Activated CD8-positive, alpha-beta T cell treated with anti-CD3 and anti-CD28 coated beads, Interleukin-2, amount 10 ng/mL, durations not matched to agents 7 days and 5 days (primary cell): ENCODE measurements at regions of chr6 and their contacts with region 1.

Region 1: GRCh38 chr6:143427109-143427817 is 23.2 kb downstream of the ADAT2 start:
- DNase-seq: peak; percentile 79
- ATAC-seq: peak; percentile 98
- H3K4me3 Mint-ChIP-seq: no peak overlapping the region
- H3K27ac Mint-ChIP-seq: no peak overlapping the region
- H3K4me1 Mint-ChIP-seq: no peaks in the 10 kb centered on the region
- H3K27me3 Mint-ChIP-seq: no peaks in the 10 kb centered on the region

Region 2: DNA sequence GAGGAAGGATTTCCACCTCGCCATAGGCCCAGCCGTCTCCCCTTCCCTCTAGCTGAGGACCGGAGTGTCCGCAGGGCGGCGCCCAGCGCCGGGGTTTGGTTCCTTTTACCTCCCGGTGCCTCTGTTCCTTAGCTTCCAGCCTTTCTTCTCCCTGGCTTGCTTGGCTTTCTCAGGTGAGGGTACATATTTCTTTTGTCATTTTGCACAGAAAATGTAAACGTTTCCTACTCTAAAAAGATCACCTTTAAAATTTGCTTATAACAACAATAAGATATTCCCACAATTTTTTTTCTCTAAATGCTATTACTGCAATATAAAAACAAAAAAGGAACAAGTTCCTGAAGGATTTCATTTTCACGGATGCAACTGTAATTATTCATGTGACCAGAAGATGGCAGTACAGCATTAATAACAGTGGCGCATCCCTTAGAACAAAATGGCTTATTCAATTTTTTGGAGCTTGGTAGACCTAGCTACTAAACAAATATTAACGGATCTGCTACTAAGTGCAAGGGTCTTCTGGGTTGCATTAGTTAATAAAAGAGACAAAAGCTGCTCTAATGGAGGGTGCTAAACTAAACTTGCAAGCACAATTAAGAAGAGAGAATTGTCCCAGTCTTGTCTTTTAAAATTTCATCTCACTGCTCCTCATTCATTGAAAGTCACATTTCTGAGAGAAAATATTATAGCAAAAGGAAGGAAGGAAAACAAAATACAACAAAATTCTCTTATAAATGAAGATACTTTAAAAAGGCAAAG is 952.6 kb before region 1 on chr6:
- CTCF ChIA-PET with region 1: interaction called, 33 read pairs
- POLR2A ChIA-PET with region 1: no interaction called
- DNase-seq: no peak
- ATAC-seq: no peak
- H3K4me3 Mint-ChIP-seq: no peak overlapping the region
- H3K27ac Mint-ChIP-seq: no peak overlapping the region
- H3K4me1 Mint-ChIP-seq: peaks cover 14% of the 10 kb centered on the region
- H3K27me3 Mint-ChIP-seq: peaks cover 3% of the 10 kb centered on the region

Region 3: GRCh38 chr6:143026696-143027449 is 400.4 kb before region 1 on chr6:
- CTCF ChIA-PET with region 1: interaction called, 12 read pairs
- POLR2A ChIA-PET with region 1: no interaction called
- DNase-seq: peak; percentile 54
- ATAC-seq: peak; percentile 64
- H3K4me3 Mint-ChIP-seq: no peak overlapping the region
- H3K27ac Mint-ChIP-seq: no peak overlapping the region
- H3K4me1 Mint-ChIP-seq: no peaks in the 10 kb centered on the region
- H3K27me3 Mint-ChIP-seq: no peaks in the 10 kb centered on the region

Region 4: DNA sequence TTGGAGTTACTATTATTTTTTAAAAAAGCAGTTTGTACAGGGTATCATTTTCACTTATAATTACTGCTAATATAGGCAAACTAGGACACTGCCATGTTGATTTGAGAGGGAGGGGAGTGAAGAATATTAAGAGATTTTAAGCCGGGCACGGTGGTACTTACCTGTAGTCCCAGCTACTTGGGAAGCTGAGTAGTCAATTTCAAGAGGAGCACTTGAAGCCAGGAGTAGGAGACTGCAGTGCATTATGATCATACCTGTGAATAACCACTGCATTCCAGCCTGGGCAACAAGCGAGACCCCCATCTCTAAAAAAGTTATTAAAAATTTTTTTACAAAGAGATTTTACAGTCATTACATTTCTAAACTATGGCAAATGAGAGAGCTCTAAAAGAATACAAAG is 12.5 kb before region 1 on chr6:
- CTCF ChIA-PET with region 1: interaction called, 23 read pairs
- POLR2A ChIA-PET with region 1: interaction called, 3 read pairs
- DNase-seq: no peak
- ATAC-seq: no peak
- H3K4me3 Mint-ChIP-seq: no peak overlapping the region
- H3K27ac Mint-ChIP-seq: no peak overlapping the region
- H3K4me1 Mint-ChIP-seq: no peaks in the 10 kb centered on the region
- H3K27me3 Mint-ChIP-seq: peaks cover 2% of the 10 kb centered on the region

Region 5: GRCh38 chr6:143450453-143451371 is 23.4 kb after region 1 on chr6 and contains the starts of genes ADAT2 and PEX3:
- CTCF ChIA-PET with region 1: interaction called, 10 read pairs
- POLR2A ChIA-PET with region 1: interaction called, 7 read pairs
- DNase-seq: peak; percentile 95
- ATAC-seq: peak; percentile 97
- H3K4me3 Mint-ChIP-seq: peak within 1 kb of the TSS; percentile 99
- H3K27ac Mint-ChIP-seq: peak within 1 kb of the TSS; percentile 100
- H3K4me1 Mint-ChIP-seq: peaks cover 23% of the 10 kb centered on the region
- H3K27me3 Mint-ChIP-seq: no peaks in the 10 kb centered on the region
- total RNA-seq, gene ADAT2: 21.4 to 22.0 TPM
- total RNA-seq, gene PEX3: 14.5 to 15.1 TPM